ENCODE measurements at regions of chr5 and their contacts with region 1.

Region 1: GRCh38 chr5:62305715-62306322 is at the start of gene KIF2A:
- DNase-seq: peak; percentile 80 to 97 (median 90)
- ATAC-seq: peak; percentile 80
- H3K4me3 ChIP-seq: peak within 1 kb of the TSS; percentile 78
- H3K4me3 Mint-ChIP-seq: peak within 1 kb of the TSS; percentile 93
- H3K27ac ChIP-seq: peak within 1 kb of the TSS; percentile 84 to 86
- H3K27ac Mint-ChIP-seq: peak within 1 kb of the TSS; percentile 94
- H3K4me1 ChIP-seq: peaks cover 33% of the 10 kb centered on the region
- H3K4me1 Mint-ChIP-seq: peaks cover 54% of the 10 kb centered on the region
- H3K27me3 ChIP-seq: no peaks in the 10 kb centered on the region
- H3K27me3 Mint-ChIP-seq: no peaks in the 10 kb centered on the region
- CTCF ChIP-seq: no peak
- total RNA-seq, gene KIF2A: 78.4 to 81.8 TPM

Region 2: DNA sequence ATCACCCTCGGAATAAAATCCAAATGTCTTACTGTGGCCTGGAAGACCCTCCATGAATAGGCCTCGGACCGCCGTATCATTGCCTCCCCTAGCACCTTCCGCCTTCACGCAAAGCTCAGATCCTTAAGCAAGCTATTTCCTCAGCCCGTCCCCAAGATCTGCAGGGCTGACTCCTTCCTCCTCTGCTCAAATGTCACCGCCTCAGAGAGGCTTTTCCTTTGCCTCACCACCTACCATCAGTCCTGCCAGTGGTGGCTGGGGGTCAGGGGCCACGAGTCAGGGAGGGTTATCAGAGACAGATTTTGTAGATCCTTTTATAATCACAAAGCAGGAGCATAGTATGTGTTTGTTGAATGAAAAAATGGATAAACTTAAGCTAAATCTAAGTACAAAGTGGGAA is 74.2 kb before region 1 on chr5:
- CTCF ChIA-PET with region 1: no interaction called
- POLR2A ChIA-PET with region 1: no interaction called
- intact Hi-C with region 1: loop called (anchors 10 kb)
- DNase-seq: no peak
- ATAC-seq: no peak
- H3K4me3 ChIP-seq: no peak overlapping the region
- H3K4me3 Mint-ChIP-seq: no peak overlapping the region
- H3K27ac ChIP-seq: no peak overlapping the region
- H3K27ac Mint-ChIP-seq: no peak overlapping the region
- H3K4me1 ChIP-seq: no peaks in the 10 kb centered on the region
- H3K4me1 Mint-ChIP-seq: no peaks in the 10 kb centered on the region
- H3K27me3 ChIP-seq: no peaks in the 10 kb centered on the region
- H3K27me3 Mint-ChIP-seq: peaks cover 7% of the 10 kb centered on the region
- CTCF ChIP-seq: no peak

Region 3: DNA sequence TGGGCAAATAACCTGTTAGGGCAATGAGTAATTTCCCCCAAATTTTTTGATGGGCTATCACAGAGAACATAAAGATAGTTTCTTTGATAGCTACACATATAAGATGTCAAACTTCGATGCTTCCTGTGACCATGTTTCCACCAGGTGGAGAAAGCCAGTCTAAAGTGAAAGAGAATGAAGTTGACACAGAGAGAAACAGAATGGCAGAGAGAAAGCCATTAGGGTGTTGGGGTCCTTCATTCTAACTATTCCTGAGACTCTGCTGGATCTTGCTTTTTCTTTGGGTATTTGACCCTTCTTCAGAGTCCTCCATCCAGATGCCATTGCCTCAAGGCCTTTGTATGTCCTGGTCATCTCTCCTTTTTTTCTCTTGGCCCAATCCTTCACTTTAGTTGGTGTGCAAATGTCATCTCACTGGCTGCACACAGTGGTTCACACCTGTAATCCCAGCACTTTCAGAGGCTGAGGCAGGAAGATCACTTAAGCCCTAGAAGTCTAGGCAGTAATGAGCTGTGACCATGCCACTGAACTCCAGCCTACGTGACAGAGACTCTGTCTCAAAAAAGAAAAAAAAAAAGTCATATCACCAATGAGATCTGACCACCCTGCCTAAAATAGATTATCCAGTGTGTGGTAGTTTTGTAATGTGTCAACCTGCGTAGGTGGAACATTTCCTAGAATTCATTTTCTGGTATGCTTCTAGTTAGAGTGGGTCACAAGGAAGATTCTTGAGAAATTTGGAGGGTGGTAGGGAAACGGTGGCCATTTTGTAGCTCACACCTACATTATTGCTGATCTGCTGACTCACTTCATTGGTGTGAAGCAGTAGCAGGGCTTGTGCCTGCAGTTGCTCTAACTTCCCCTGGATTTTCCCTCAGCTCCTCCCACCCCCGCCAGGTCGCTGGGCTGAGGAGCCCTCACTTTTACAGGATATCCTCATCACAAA is 20.6 kb before region 1 on chr5:
- CTCF ChIA-PET with region 1: interaction called, 3 read pairs
- POLR2A ChIA-PET with region 1: interaction called, 12 read pairs
- intact Hi-C with region 1: no loop called
- DNase-seq: peak in 4 of 14 experiments; percentile 4 to 67 (median 36)
- ATAC-seq: peak; percentile 39
- H3K4me3 ChIP-seq: no peak overlapping the region
- H3K4me3 Mint-ChIP-seq: no peak overlapping the region
- H3K27ac ChIP-seq: no peak overlapping the region
- H3K27ac Mint-ChIP-seq: no peak overlapping the region
- H3K4me1 ChIP-seq: peaks cover 15% of the 10 kb centered on the region
- H3K4me1 Mint-ChIP-seq: peaks cover 59% of the 10 kb centered on the region
- H3K27me3 ChIP-seq: no peaks in the 10 kb centered on the region
- H3K27me3 Mint-ChIP-seq: no peaks in the 10 kb centered on the region
- CTCF ChIP-seq: no peak

Region 4: GRCh38 chr5:62340392-62340791 is 34.6 kb after region 1 on chr5:
- CTCF ChIA-PET with region 1: no interaction called
- POLR2A ChIA-PET with region 1: interaction called, 6 read pairs
- intact Hi-C with region 1: loop called (anchors 1 to 5 kb)
- DNase-seq: peak in 3 of 14 experiments; percentile 19 to 70 (median 56)
- ATAC-seq: peak; percentile 35
- H3K4me3 ChIP-seq: no peak overlapping the region
- H3K4me3 Mint-ChIP-seq: no peak overlapping the region
- H3K27ac ChIP-seq: peak overlapping the region in 1 of 2 donors; percentile 13
- H3K27ac Mint-ChIP-seq: peak overlapping the region; percentile 11
- H3K4me1 ChIP-seq: peaks cover 28% of the 10 kb centered on the region
- H3K4me1 Mint-ChIP-seq: peaks cover 76% of the 10 kb centered on the region
- H3K27me3 ChIP-seq: no peaks in the 10 kb centered on the region
- H3K27me3 Mint-ChIP-seq: no peaks in the 10 kb centered on the region
- CTCF ChIP-seq: peak; percentile 57

Region 5: GRCh38 chr5:62412537-62413329 is 106.9 kb after region 1 on chr5 and contains the start of gene IPO11:
- CTCF ChIA-PET with region 1: interaction called, 3 read pairs
- POLR2A ChIA-PET with region 1: interaction called, 8 read pairs
- intact Hi-C with region 1: loop called in 1 of 2 experiments (anchors 2 kb)
- DNase-seq: peak; percentile 97 to 100 (median 98)
- ATAC-seq: peak; percentile 94
- H3K4me3 ChIP-seq: peak within 1 kb of the TSS; percentile 86
- H3K4me3 Mint-ChIP-seq: peak within 1 kb of the TSS; percentile 88
- H3K27ac ChIP-seq: peak within 1 kb of the TSS; percentile 69 to 79
- H3K27ac Mint-ChIP-seq: peak within 1 kb of the TSS; percentile 78
- H3K4me1 ChIP-seq: peaks cover 14% of the 10 kb centered on the region
- H3K4me1 Mint-ChIP-seq: peaks cover 30% of the 10 kb centered on the region
- H3K27me3 ChIP-seq: no peaks in the 10 kb centered on the region
- H3K27me3 Mint-ChIP-seq: no peaks in the 10 kb centered on the region
- CTCF ChIP-seq: no peak
- total RNA-seq, gene IPO11: 15.1 to 16.1 TPM

Region 6: GRCh38 chr5:63154476-63155303 is 848.9 kb after region 1 on chr5:
- CTCF ChIA-PET with region 1: no interaction called
- POLR2A ChIA-PET with region 1: no interaction called
- intact Hi-C with region 1: no loop called
- DNase-seq: no peak
- ATAC-seq: no peak
- H3K4me3 ChIP-seq: no peak overlapping the region
- H3K4me3 Mint-ChIP-seq: no peak overlapping the region
- H3K27ac ChIP-seq: no peak overlapping the region
- H3K27ac Mint-ChIP-seq: no peak overlapping the region
- H3K4me1 ChIP-seq: no peaks in the 10 kb centered on the region
- H3K4me1 Mint-ChIP-seq: no peaks in the 10 kb centered on the region
- H3K27me3 ChIP-seq: no peaks in the 10 kb centered on the region
- H3K27me3 Mint-ChIP-seq: no peaks in the 10 kb centered on the region
- CTCF ChIP-seq: no peak